ENCODE measurements at regions of chr2 and their contacts with region 1.

Region 1: GRCh38 chr2:235595422-235596010 is 101.7 kb downstream of the AGAP1 start:
- DNase-seq: peak; percentile 81 to 83
- H3K4me3 ChIP-seq: no peak overlapping the region
- H3K27ac ChIP-seq: no peak overlapping the region
- H3K4me1 ChIP-seq: peaks cover 0 to 5% (median 0%) of the 10 kb centered on the region in 4 donors
- H3K27me3 ChIP-seq: no peaks in the 10 kb centered on the region
- CTCF ChIP-seq: peak; percentile 78 to 87

Region 2: GRCh38 chr2:235142601-235143000 is 452.9 kb before region 1 on chr2:
- intact Hi-C with region 1: loop called (anchors 5 kb)
- DNase-seq: no peak
- H3K4me3 ChIP-seq: no peak overlapping the region
- H3K27ac ChIP-seq: no peak overlapping the region
- H3K4me1 ChIP-seq: no peaks in the 10 kb centered on the region
- H3K27me3 ChIP-seq: peaks cover 0 to 3% of the 10 kb centered on the region in 2 donors
- CTCF ChIP-seq: no peak

Region 3: DNA sequence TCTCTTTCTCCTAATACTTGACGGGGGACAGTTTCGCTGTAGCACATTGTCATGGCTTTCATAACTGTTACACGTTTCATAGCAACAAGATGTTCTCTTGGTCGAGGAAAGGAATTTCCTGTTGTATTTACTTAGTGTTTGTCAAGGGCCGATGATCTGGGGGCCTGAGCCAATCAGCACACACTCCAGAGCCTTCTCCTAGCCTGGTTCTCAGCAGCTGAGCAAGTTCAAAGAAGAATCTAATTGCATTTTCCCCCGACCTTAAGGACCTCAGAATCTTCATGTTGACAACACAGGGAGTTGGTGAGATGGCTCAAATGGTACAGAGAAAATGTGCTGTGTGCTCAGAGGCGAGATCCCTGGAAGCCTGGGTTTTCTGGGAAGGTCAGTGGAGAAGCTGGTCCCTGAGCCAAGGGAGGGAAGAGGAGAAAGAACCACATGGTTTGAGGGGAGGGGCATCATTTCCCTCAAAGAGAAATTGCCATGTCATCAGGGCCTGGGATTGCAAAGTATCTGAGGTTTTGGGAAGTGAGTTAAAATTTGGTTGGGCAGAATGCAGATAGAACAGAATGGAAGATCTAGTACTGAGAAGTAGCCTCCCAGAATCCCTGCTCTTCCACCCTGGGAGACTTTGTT is 178.5 kb before region 1 on chr2:
- intact Hi-C with region 1: no loop called
- DNase-seq: no peak
- H3K4me3 ChIP-seq: no peak overlapping the region
- H3K27ac ChIP-seq: no peak overlapping the region
- H3K4me1 ChIP-seq: no peaks in the 10 kb centered on the region
- H3K27me3 ChIP-seq: peaks cover 0 to 6% of the 10 kb centered on the region in 2 donors
- CTCF ChIP-seq: no peak

Region 4: DNA sequence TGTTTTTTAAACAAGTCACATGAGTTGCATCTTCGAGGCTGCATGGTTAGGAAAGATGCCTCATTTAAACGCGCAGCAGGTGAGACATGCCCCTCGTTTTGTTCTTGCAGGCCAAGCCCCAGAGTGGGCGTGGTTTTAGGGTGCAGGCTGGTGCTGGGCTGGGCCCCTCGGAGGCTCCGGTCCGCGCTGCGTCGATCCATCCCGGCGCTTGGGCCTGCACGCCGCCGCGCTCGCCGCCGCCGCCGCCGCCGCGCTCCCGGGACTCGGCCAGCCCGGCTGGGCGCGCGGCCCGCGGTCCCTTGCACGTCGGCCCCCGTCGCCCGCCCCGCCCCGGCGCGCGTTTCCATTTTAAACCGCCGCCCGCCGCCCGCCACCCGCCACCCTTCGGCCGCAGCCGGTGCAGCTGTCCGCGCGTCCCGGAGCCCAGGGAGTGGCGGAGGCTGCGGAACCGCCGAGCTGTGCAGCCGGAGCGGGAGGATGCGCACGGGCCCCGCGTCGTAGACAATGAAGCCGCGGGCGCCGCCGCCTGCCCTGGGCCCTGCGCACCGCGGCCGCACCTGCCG is 73.8 kb after region 1 on chr2:
- intact Hi-C with region 1: loop called (anchors 5 kb)
- DNase-seq: peak; percentile 45 to 76
- H3K4me3 ChIP-seq: peak overlapping the region; percentile 59 to 69
- H3K27ac ChIP-seq: no peak overlapping the region
- H3K4me1 ChIP-seq: peaks cover 0 to 39% (median 27%) of the 10 kb centered on the region in 4 donors
- H3K27me3 ChIP-seq: no peaks in the 10 kb centered on the region
- CTCF ChIP-seq: no peak

Region 5: GRCh38 chr2:235746257-235747084 is 151.0 kb after region 1 on chr2:
- intact Hi-C with region 1: loop called (anchors 5 kb)
- DNase-seq: peak in 1 of 2 donors; percentile 61
- H3K4me3 ChIP-seq: no peak overlapping the region
- H3K27ac ChIP-seq: no peak overlapping the region
- H3K4me1 ChIP-seq: peaks cover 0 to 13% (median 6%) of the 10 kb centered on the region in 4 donors
- H3K27me3 ChIP-seq: no peaks in the 10 kb centered on the region
- CTCF ChIP-seq: peak; percentile 64 to 75